Activated CD8-positive, alpha-beta T cell treated with anti-CD3 and anti-CD28 coated beads for 36 hours (primary cell): ENCODE measurements at regions of chr11 and their contacts with region 1.

Region 1: DNA sequence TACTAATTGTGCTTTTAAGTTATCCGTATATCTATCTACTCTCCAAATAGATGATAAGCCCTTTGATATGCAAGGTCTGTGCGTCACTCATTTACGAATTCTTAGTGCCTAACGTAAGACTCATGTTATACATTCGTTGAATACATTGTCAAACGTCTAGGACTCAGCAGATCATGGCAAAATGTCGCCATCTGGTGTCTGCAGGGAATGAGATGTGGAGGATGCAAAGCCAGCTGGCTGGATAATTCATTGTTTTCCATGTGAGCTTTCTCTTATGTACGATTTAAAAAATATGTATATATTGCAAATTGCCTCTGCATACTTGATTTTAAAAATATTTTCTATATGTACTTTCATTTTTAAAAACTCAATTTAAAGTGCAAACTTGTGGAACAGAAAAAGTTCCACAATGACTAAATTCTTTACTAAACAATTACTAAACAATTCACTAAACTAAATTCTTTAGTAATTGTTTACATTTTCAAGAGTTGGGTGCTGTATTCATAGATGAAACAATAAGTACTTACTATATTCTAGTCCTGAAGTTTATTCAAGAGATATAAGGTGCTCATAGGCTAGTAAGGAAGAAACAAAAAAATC is 33.8 kb downstream of the ZNF202 start:
- DNase-seq: peak; percentile 79
- ATAC-seq: peak; percentile 65
- H3K4me3 Mint-ChIP-seq: no peak overlapping the region
- H3K27ac Mint-ChIP-seq: no peak overlapping the region
- H3K4me1 Mint-ChIP-seq: no peaks in the 10 kb centered on the region
- H3K27me3 Mint-ChIP-seq: peaks cover 4% of the 10 kb centered on the region
- CTCF ChIP-seq: peak; percentile 72

Region 2: GRCh38 chr11:123580557-123581275 is 127.0 kb before region 1 on chr11:
- CTCF ChIA-PET with region 1: interaction called, 15 read pairs
- POLR2A ChIA-PET with region 1: no interaction called
- intact Hi-C with region 1: no loop called
- DNase-seq: peak; percentile 72
- ATAC-seq: peak; percentile 94
- H3K4me3 Mint-ChIP-seq: no peak overlapping the region
- H3K27ac Mint-ChIP-seq: no peak overlapping the region
- H3K4me1 Mint-ChIP-seq: peaks cover 5% of the 10 kb centered on the region
- H3K27me3 Mint-ChIP-seq: peaks cover 1% of the 10 kb centered on the region
- CTCF ChIP-seq: peak; percentile 93

Region 3: GRCh38 chr11:123654566-123655081 is 53.1 kb before region 1 on chr11 and contains the start of gene SCN3B:
- CTCF ChIA-PET with region 1: interaction called, 19 read pairs
- POLR2A ChIA-PET with region 1: no interaction called
- intact Hi-C with region 1: no loop called
- DNase-seq: peak; percentile 13
- ATAC-seq: peak; percentile 55
- H3K4me3 Mint-ChIP-seq: peak within 1 kb of the TSS; percentile 41
- H3K27ac Mint-ChIP-seq: no peak within 1 kb of the TSS
- H3K4me1 Mint-ChIP-seq: peaks cover 16% of the 10 kb centered on the region
- H3K27me3 Mint-ChIP-seq: peaks cover 44% of the 10 kb centered on the region
- CTCF ChIP-seq: no peak
- total RNA-seq, gene SCN3B: not detected

Region 4: GRCh38 chr11:123684601-123685000 is 23.1 kb before region 1 on chr11:
- CTCF ChIA-PET with region 1: interaction called, 17 read pairs
- POLR2A ChIA-PET with region 1: interaction called, 8 read pairs
- intact Hi-C with region 1: no loop called
- DNase-seq: no peak
- ATAC-seq: no peak
- H3K4me3 Mint-ChIP-seq: no peak overlapping the region
- H3K27ac Mint-ChIP-seq: no peak overlapping the region
- H3K4me1 Mint-ChIP-seq: peaks cover 18% of the 10 kb centered on the region
- H3K27me3 Mint-ChIP-seq: peaks cover 2% of the 10 kb centered on the region
- CTCF ChIP-seq: no peak

Region 5: GRCh38 chr11:123719452-123719851 is 11.7 kb after region 1 on chr11:
- CTCF ChIA-PET with region 1: interaction called, 22 read pairs
- POLR2A ChIA-PET with region 1: no interaction called
- intact Hi-C with region 1: no loop called
- DNase-seq: no peak
- ATAC-seq: no peak
- H3K4me3 Mint-ChIP-seq: no peak overlapping the region
- H3K27ac Mint-ChIP-seq: no peak overlapping the region
- H3K4me1 Mint-ChIP-seq: no peaks in the 10 kb centered on the region
- H3K27me3 Mint-ChIP-seq: peaks cover 13% of the 10 kb centered on the region
- CTCF ChIP-seq: no peak

Region 6: GRCh38 chr11:123765601-123766000 is 57.9 kb after region 1 on chr11:
- CTCF ChIA-PET with region 1: no interaction called
- POLR2A ChIA-PET with region 1: no interaction called
- intact Hi-C with region 1: no loop called
- DNase-seq: no peak
- ATAC-seq: no peak
- H3K4me3 Mint-ChIP-seq: no peak overlapping the region
- H3K27ac Mint-ChIP-seq: no peak overlapping the region
- H3K4me1 Mint-ChIP-seq: no peaks in the 10 kb centered on the region
- H3K27me3 Mint-ChIP-seq: peaks cover 7% of the 10 kb centered on the region
- CTCF ChIP-seq: no peak